Sigmoid colon (tissue), 7 donors: ENCODE measurements at regions of chr12 and their contacts with region 1.

Region 1: DNA sequence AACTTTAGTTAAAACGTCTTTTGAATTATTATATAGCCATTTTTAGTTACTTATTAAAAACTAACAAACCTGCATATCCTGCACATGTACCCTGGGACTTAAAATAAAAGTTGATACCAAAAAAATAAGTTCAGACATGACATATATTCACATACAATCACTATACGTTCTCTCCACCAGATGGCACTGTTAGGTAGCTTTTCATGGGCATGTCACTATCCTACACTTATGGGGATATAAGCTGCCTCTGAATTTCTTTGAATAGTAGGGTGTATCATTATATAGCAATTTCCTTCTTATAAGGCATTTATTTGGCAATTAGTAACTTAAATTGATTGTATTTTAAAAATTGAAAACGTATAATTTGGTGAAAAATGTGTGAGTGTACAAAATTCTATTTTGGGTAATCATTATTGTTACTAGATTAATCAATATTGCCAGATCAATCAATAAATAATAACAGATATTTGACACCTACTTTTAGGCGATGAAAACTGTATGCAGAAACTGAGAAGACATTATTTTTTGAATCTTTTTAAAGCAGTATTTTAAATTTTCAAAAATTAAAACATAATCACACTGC is 31.8 kb upstream of the OR10A7 start:
- DNase-seq: no peak
- H3K4me3 ChIP-seq: no peak overlapping the region
- H3K27ac ChIP-seq: no peak overlapping the region
- H3K4me1 ChIP-seq: no peaks in the 10 kb centered on the region
- H3K27me3 ChIP-seq: no peaks in the 10 kb centered on the region
- CTCF ChIP-seq: peak; percentile 20 to 63 (median 55)
- EP300 ChIP-seq: no peak
- POLR2A ChIP-seq: no peak

Region 2: DNA sequence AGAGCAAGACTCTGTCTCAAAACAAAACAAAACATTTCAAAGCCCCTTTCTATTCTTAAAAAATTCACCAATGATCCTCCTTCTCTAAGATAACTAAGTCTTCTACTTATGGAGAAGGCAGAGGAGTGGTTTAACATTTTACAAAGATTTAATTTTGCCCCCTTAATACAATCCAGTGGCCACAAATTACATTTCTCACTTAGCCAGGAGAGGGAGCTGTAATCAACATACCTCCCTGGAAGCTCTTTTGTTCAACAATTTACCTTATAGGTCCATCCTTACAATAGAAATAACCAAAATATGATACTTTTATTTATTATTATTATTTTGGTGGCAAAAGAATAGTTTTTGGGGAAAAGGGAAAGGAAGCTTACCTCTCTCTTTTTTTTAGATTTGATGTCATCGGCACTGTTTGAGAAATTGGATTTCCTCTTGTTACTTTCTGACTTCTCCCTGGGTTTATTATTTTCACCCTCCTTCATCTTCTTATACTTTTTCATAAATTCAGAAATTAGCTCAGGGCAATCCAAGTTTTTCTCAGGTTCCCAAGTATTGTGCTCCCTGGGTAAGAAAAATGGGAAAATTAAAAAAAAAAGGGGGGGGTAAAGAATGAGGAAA is 937.3 kb before region 1 on chr12:
- intact Hi-C with region 1: no loop called
- DNase-seq: no peak
- H3K4me3 ChIP-seq: no peak overlapping the region
- H3K27ac ChIP-seq: no peak overlapping the region
- H3K4me1 ChIP-seq: peaks cover 0 to 16% (median 4%) of the 10 kb centered on the region in 4 donors
- H3K27me3 ChIP-seq: no peaks in the 10 kb centered on the region
- CTCF ChIP-seq: peak; percentile 11 to 52 (median 41)
- EP300 ChIP-seq: no peak
- POLR2A ChIP-seq: no peak

Region 3: GRCh38 chr12:55619354-55620138 is 430.5 kb after region 1 on chr12:
- intact Hi-C with region 1: loop called (anchors 2 kb)
- DNase-seq: no peak
- H3K4me3 ChIP-seq: no peak overlapping the region
- H3K27ac ChIP-seq: no peak overlapping the region
- H3K4me1 ChIP-seq: no peaks in the 10 kb centered on the region
- H3K27me3 ChIP-seq: no peaks in the 10 kb centered on the region
- CTCF ChIP-seq: peak; percentile 56 to 73 (median 65)
- EP300 ChIP-seq: no peak
- POLR2A ChIP-seq: no peak